ENCODE measurements at regions of chr14 and their contacts with region 1.

Region 1: DNA sequence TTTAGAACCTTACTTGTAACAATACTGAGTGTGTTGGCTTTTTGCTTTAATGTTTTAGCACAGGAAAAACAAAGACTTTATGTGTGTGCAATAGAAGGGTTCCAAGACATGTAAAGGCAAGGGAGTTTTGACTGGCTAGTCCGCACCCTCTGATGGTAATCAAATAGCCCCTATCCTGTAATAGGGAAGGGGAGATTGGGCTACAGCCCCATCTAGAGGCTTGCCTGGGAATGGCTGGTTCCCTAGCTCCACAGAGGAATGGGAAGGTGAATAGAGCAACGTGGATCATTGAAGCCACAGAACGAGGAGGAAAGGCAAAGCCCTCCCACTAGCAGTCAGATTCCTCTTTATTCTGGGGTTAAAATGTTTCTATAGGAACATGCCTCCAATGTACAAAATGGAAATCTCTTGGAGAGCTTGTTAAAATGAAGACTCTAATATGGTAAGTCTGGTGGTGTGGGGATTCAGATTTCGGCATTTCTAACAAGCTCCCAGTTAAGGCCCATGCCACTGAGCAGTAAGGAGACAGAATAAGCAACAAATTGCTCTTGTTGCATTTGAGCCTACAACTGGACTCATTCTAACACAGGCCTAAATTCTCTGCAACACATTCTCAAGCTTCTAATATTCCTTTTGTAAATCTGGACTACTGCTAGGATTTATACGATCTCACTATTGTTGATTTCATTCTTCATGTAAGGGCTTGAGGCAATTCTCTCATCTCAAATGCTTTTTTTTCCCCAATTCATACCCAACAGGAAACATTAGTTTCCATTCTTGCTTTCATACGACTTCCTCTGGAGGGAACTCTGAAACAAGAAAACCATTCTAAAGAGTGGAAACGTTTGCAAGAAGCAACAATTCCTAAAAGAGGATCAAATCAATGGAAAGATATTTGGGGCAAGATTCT is 57.1 kb downstream of the NIN start:
- DNase-seq: peak in 5 of 14 experiments; percentile 10 to 47 (median 35)
- ATAC-seq: peak; percentile 72
- H3K4me3 ChIP-seq: no peak overlapping the region
- H3K4me3 Mint-ChIP-seq: no peak overlapping the region
- H3K27ac ChIP-seq: no peak overlapping the region
- H3K27ac Mint-ChIP-seq: peak overlapping the region; percentile 0
- H3K4me1 ChIP-seq: peaks cover 11% of the 10 kb centered on the region
- H3K4me1 Mint-ChIP-seq: peaks cover 37% of the 10 kb centered on the region
- H3K27me3 ChIP-seq: no peaks in the 10 kb centered on the region
- H3K27me3 Mint-ChIP-seq: no peaks in the 10 kb centered on the region
- CTCF ChIP-seq: peak; percentile 63

Region 2: DNA sequence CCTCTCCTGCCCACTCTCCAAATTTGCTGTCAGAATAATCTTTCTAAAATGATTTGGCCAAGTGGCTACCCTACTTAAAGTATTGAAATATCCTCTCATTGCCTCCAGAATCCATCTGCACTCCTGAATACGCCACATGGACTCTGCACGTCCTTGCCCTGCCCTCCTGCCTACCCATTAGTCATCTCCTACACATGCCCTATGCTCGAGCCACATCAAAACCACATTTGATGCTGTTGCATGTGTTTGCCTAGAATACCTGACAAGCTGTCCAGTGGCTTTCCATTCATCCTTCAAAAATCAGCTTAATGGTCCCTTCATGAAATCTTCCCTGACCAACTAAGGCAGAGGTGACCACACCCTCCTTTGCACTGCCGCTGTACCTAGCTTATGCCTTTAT is 674.6 kb before region 1 on chr14:
- CTCF ChIA-PET with region 1: no interaction called
- POLR2A ChIA-PET with region 1: no interaction called
- intact Hi-C with region 1: no loop called
- DNase-seq: peak in 1 of 14 experiments; percentile 39
- ATAC-seq: no peak
- H3K4me3 ChIP-seq: no peak overlapping the region
- H3K4me3 Mint-ChIP-seq: peak overlapping the region; percentile 12
- H3K27ac ChIP-seq: no peak overlapping the region
- H3K27ac Mint-ChIP-seq: peak overlapping the region; percentile 79
- H3K4me1 ChIP-seq: peaks cover 47% of the 10 kb centered on the region
- H3K4me1 Mint-ChIP-seq: peaks cover 64% of the 10 kb centered on the region
- H3K27me3 ChIP-seq: no peaks in the 10 kb centered on the region
- H3K27me3 Mint-ChIP-seq: no peaks in the 10 kb centered on the region
- CTCF ChIP-seq: no peak

Region 3: DNA sequence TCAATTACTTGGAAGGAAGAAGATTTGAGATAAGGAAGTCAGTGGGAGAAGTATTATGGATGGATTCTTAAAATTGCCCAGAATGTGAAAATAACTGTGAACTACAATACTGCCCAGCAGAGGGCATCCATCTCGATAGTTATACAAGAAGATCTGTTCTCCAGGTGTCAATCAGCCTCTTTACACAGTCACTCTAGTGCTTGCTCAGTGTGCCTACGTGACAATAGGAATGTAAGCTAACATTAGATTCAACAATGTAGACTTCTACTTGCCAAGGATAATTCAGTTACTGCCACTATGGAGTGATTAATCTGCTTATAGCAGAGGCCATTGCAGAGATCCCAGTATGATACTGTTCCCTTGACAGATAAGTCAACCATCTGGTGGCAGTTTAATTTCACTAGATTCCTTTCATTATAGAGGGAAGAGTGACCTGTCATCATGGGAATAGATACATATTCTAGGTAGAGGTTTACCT is 230.9 kb before region 1 on chr14:
- CTCF ChIA-PET with region 1: no interaction called
- POLR2A ChIA-PET with region 1: interaction called, 3 read pairs
- intact Hi-C with region 1: loop called (anchors 1 to 5 kb)
- DNase-seq: peak in 7 of 14 experiments; percentile 13 to 71 (median 53)
- ATAC-seq: peak; percentile 80
- H3K4me3 ChIP-seq: no peak overlapping the region
- H3K4me3 Mint-ChIP-seq: no peak overlapping the region
- H3K27ac ChIP-seq: no peak overlapping the region
- H3K27ac Mint-ChIP-seq: no peak overlapping the region
- H3K4me1 ChIP-seq: no peaks in the 10 kb centered on the region
- H3K4me1 Mint-ChIP-seq: peaks cover 14% of the 10 kb centered on the region
- H3K27me3 ChIP-seq: no peaks in the 10 kb centered on the region
- H3K27me3 Mint-ChIP-seq: no peaks in the 10 kb centered on the region
- CTCF ChIP-seq: peak; percentile 72

Region 4: GRCh38 chr14:50599700-50600444 is 174.0 kb before region 1 on chr14:
- CTCF ChIA-PET with region 1: no interaction called
- POLR2A ChIA-PET with region 1: no interaction called
- intact Hi-C with region 1: loop called (anchors 1 to 5 kb)
- DNase-seq: peak in 3 of 14 experiments; percentile 32 to 44 (median 44)
- ATAC-seq: no peak
- H3K4me3 ChIP-seq: no peak overlapping the region
- H3K4me3 Mint-ChIP-seq: no peak overlapping the region
- H3K27ac ChIP-seq: no peak overlapping the region
- H3K27ac Mint-ChIP-seq: no peak overlapping the region
- H3K4me1 ChIP-seq: no peaks in the 10 kb centered on the region
- H3K4me1 Mint-ChIP-seq: no peaks in the 10 kb centered on the region
- H3K27me3 ChIP-seq: no peaks in the 10 kb centered on the region
- H3K27me3 Mint-ChIP-seq: no peaks in the 10 kb centered on the region
- CTCF ChIP-seq: peak; percentile 55

Region 5: GRCh38 chr14:50619556-50620141 is 154.2 kb before region 1 on chr14:
- CTCF ChIA-PET with region 1: no interaction called
- POLR2A ChIA-PET with region 1: no interaction called
- intact Hi-C with region 1: loop called in 1 of 2 experiments (anchors 5 kb)
- DNase-seq: peak in 3 of 14 experiments; percentile 26 to 33 (median 32)
- ATAC-seq: no peak
- H3K4me3 ChIP-seq: no peak overlapping the region
- H3K4me3 Mint-ChIP-seq: no peak overlapping the region
- H3K27ac ChIP-seq: no peak overlapping the region
- H3K27ac Mint-ChIP-seq: no peak overlapping the region
- H3K4me1 ChIP-seq: no peaks in the 10 kb centered on the region
- H3K4me1 Mint-ChIP-seq: no peaks in the 10 kb centered on the region
- H3K27me3 ChIP-seq: no peaks in the 10 kb centered on the region
- H3K27me3 Mint-ChIP-seq: no peaks in the 10 kb centered on the region
- CTCF ChIP-seq: peak; percentile 26

Region 6: DNA sequence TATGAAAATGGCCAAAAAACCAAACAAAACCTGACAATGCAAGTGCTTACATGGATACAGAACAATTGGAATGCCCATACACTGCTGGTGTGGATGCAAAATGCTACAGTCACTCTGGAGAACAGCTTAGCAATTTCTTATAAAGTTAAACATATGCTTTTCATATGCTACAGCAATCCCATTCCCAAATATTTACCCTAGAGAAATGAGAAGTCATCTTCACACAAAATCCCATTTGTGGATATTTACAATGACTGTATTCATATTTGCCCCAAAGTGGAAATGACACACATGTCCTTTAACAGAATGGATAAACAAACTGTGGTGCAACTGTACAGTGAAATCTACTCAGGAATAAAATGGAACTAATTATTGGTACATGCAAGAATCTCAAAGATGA is 126.1 kb before region 1 on chr14:
- CTCF ChIA-PET with region 1: no interaction called
- POLR2A ChIA-PET with region 1: no interaction called
- intact Hi-C with region 1: no loop called
- DNase-seq: no peak
- ATAC-seq: no peak
- H3K4me3 ChIP-seq: no peak overlapping the region
- H3K4me3 Mint-ChIP-seq: no peak overlapping the region
- H3K27ac ChIP-seq: no peak overlapping the region
- H3K27ac Mint-ChIP-seq: no peak overlapping the region
- H3K4me1 ChIP-seq: no peaks in the 10 kb centered on the region
- H3K4me1 Mint-ChIP-seq: no peaks in the 10 kb centered on the region
- H3K27me3 ChIP-seq: no peaks in the 10 kb centered on the region
- H3K27me3 Mint-ChIP-seq: no peaks in the 10 kb centered on the region
- CTCF ChIP-seq: no peak